ENCODE measurements at regions of chr12 and their contacts with region 1.

Region 1: DNA sequence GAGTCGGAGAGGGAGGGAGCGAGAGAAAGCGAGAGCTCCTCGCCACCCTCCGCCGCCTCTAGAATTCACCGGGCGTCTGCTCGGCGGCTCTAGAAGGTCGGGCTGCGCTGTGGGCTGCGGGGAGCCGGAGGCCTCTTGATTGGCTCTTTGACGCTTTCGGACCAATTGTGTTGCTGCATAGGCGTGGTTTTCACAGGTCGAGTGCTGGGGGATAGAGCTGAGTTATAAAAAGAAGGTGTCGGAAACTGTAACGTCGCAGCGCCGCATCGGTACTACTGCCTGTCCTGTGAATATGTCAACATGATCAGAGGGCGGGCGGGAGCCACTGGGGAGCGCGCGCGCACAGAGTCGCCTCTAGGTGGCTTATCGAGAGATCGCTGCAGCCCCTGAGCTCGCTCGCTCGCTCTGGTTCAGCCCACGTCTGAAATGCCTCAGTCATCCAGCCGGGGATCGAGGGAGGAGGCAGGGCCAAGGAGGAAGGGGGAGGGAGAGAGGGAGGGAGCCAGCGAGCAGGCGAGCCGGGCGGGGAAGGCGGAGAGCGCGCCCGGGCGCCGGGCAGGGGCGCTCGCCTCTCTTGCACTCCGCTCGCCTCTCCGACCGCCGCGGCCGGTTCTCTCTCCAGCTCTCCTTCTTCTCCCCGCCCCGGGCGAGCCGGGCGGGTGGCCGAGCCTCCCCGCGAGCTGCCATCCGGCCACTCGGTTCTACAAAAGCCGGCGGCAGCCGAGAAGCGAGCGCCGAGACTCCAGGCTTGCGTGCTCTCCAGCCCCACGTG is at the start of gene TBX3:
- DNase-seq: peak; percentile 98
- ATAC-seq: peak; percentile 89
- H3K4me3 ChIP-seq: peak within 1 kb of the TSS; percentile 74 to 81
- H3K27ac ChIP-seq: peak within 1 kb of the TSS; percentile 89
- H3K4me1 ChIP-seq: peaks cover 6 to 23% of the 10 kb centered on the region in 2 experiments
- H3K27me3 ChIP-seq: peaks cover 11% of the 10 kb centered on the region
- CTCF ChIP-seq: peak; percentile 40 to 57 (median 47); a peak in 5 of 6 replicates
- POLR2A ChIP-seq: peak; percentile 69
- RAD21 ChIP-seq: peak; percentile 43
- total RNA-seq, gene TBX3: 12.8 TPM

Region 2: GRCh38 chr12:114933428-114934168 is 249.3 kb after region 1 on chr12:
- CTCF ChIA-PET with region 1: no interaction called
- POLR2A ChIA-PET with region 1: no interaction called
- RAD21 ChIA-PET with region 1: no interaction called
- intact Hi-C with region 1: loop called (anchors 10 kb)
- DNase-seq: peak; percentile 73
- ATAC-seq: peak; percentile 93
- H3K4me3 ChIP-seq: peak overlapping the region in 1 of 2 experiments; percentile 8; a peak in 2 of 4 replicates
- H3K27ac ChIP-seq: no peak overlapping the region
- H3K4me1 ChIP-seq: peaks cover 12 to 28% of the 10 kb centered on the region in 2 experiments
- H3K27me3 ChIP-seq: no peaks in the 10 kb centered on the region
- CTCF ChIP-seq: no peak
- POLR2A ChIP-seq: no peak
- RAD21 ChIP-seq: no peak

Region 3: DNA sequence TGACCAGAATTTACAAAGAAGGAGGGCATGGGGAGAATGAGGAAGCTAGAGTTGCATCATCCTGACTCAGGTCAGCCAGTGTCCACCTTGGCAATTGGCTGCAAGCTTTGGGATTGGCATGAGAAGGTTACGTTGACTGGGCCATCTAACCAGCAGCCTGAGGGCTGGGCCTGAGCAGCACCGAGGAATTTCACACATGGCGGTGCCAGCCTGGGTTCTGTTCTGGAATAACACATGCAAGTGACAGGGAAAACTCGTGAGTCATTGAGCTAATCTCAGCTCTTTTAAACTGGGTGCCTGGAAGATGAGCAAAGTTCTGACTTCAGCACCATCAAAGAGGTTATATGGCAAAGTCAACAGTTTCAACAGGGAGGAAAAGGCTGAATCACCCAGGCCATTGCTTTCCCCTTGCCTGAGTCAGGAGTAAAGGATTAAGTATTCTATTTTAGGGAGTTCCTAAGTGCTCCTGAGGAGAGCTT is 542.9 kb after region 1 on chr12:
- CTCF ChIA-PET with region 1: no interaction called
- POLR2A ChIA-PET with region 1: no interaction called
- RAD21 ChIA-PET with region 1: no interaction called
- intact Hi-C with region 1: loop called (anchors 5 kb)
- DNase-seq: peak; percentile 60
- ATAC-seq: peak; percentile 72
- H3K4me3 ChIP-seq: peak overlapping the region in 1 of 2 experiments; percentile 32; a peak in 1 of 4 replicates
- H3K27ac ChIP-seq: peak overlapping the region; percentile 15; the same call in 1 of the 2 replicates
- H3K4me1 ChIP-seq: peaks cover 0 to 31% of the 10 kb centered on the region in 2 experiments
- H3K27me3 ChIP-seq: no peaks in the 10 kb centered on the region
- CTCF ChIP-seq: no peak
- POLR2A ChIP-seq: no peak
- RAD21 ChIP-seq: 0 out of 2 replicates have a peak, but pooled peaks have one; percentile 1

Region 4: GRCh38 chr12:115473257-115473956 is 789.1 kb after region 1 on chr12:
- CTCF ChIA-PET with region 1: no interaction called
- POLR2A ChIA-PET with region 1: no interaction called
- RAD21 ChIA-PET with region 1: no interaction called
- intact Hi-C with region 1: loop called (anchors 5 kb)
- DNase-seq: no peak
- ATAC-seq: no peak
- H3K4me3 ChIP-seq: no peak overlapping the region
- H3K27ac ChIP-seq: peak overlapping the region; percentile 45
- H3K4me1 ChIP-seq: peaks cover 18 to 34% of the 10 kb centered on the region in 2 experiments; a peak in 3 of 4 replicates
- H3K27me3 ChIP-seq: no peaks in the 10 kb centered on the region
- CTCF ChIP-seq: no peak
- POLR2A ChIP-seq: no peak
- RAD21 ChIP-seq: no peak

Region 5: DNA sequence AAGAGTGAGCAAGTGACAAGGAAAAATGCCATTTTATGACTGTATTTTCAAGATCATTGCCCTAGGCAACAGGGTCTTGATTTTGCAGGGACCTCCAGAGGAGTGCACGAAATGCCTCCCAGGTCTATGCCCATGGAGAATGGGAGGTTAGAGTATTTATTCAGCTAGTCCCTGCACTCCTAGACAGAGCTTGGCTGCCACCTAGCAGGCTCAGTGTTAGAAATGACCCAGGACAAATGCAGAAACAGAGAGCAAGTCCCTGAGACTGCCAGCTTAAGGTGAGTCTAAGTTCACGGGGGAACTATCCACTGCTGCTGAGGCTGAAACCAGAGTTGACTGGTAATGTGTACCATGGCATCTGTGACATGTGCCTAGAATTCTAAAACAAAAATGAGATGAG is 1086.8 kb after region 1 on chr12:
- CTCF ChIA-PET with region 1: interaction called, 3 read pairs
- POLR2A ChIA-PET with region 1: interaction called, 3 read pairs
- RAD21 ChIA-PET with region 1: no interaction called
- intact Hi-C with region 1: loop called (anchors 5 kb)
- DNase-seq: peak; percentile 13
- ATAC-seq: peak; percentile 61
- H3K4me3 ChIP-seq: no peak overlapping the region
- H3K27ac ChIP-seq: no peak overlapping the region
- H3K4me1 ChIP-seq: peaks cover 8 to 29% of the 10 kb centered on the region in 2 experiments
- H3K27me3 ChIP-seq: no peaks in the 10 kb centered on the region
- CTCF ChIP-seq: peak; percentile 23 to 27 (median 27); a peak in 4 of 6 replicates
- POLR2A ChIP-seq: no peak
- RAD21 ChIP-seq: peak; percentile 61

Measured in HCT116 (cell line).